ENCODE measurements at regions of chr6 and their contacts with region 1.

Region 1: GRCh38 chr6:5143634-5144311 is 58.6 kb downstream of the PPP1R3G start:
- DNase-seq: peak; percentile 89
- ATAC-seq: peak; percentile 81
- H3K4me3 Mint-ChIP-seq: no peak overlapping the region
- H3K27ac Mint-ChIP-seq: no peak overlapping the region
- H3K4me1 Mint-ChIP-seq: peaks cover 2% of the 10 kb centered on the region
- H3K27me3 Mint-ChIP-seq: no peaks in the 10 kb centered on the region

Region 2: DNA sequence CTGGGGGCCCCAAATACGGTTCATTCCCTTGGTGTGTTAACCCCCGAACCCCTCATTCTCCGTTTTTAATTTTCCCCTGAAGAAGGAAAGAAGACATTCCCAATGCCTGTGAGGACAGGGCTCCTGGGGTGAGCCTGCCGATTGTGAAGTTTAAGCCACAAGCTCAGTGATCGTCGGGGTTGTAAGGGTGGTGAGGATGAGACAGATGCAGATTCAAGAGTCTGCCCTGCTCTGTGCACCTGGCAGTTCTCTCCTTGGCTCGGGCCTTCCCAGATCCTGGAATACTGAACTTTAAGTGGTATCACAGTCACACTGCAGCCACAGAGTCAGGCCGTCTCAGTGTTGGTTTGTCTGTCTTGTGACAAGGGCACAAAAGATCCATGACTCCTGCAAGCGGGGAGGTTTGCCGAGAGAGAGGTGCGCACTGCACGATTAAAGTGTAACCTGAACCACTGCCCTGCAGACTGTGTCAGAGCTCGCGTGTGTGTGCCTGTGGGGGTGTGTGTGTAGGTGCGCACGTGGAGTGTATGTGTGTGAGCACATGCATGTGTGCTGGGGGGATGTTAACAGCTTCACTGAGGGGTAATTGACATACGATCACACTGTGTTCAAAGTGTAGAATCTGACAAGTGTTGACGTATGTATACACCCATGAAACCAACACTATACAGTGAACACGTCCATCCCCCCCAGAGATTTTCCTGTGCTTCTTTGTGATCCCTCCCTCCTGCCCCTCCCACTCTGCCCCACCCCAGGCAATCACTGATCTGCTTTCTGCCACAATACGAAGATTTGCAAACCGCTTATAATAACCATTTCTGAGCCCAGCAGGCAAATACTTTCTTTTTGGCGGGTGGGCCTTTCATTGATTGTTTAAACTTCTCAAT is 178.9 kb before region 1 on chr6:
- CTCF ChIA-PET with region 1: no interaction called
- POLR2A ChIA-PET with region 1: no interaction called
- DNase-seq: no peak
- ATAC-seq: no peak
- H3K4me3 Mint-ChIP-seq: no peak overlapping the region
- H3K27ac Mint-ChIP-seq: no peak overlapping the region
- H3K4me1 Mint-ChIP-seq: no peaks in the 10 kb centered on the region
- H3K27me3 Mint-ChIP-seq: peaks cover 4% of the 10 kb centered on the region

Region 3: DNA sequence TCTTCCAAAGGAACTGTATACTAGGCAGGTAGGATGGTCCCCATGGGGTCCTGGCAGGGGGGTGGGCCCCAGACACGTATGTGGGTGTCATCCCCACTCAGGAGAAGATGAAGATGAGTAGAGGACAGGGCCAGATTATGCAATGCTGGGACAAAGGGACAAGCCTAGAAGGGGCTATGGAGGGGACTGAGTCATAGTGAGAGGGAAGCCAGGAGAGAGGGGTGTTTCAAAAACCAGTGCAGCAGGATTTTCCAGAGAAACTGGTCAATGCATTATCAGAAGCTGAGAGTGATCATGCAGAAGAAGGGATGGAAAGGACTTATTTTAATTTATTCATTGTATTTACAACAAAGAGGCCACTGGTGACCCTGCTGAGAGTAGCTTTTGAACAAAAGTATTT is 15.4 kb after region 1 on chr6:
- CTCF ChIA-PET with region 1: interaction called, 17 read pairs
- POLR2A ChIA-PET with region 1: no interaction called
- DNase-seq: no peak
- ATAC-seq: no peak
- H3K4me3 Mint-ChIP-seq: no peak overlapping the region
- H3K27ac Mint-ChIP-seq: no peak overlapping the region
- H3K4me1 Mint-ChIP-seq: peaks cover 6% of the 10 kb centered on the region
- H3K27me3 Mint-ChIP-seq: no peaks in the 10 kb centered on the region

Region 4: DNA sequence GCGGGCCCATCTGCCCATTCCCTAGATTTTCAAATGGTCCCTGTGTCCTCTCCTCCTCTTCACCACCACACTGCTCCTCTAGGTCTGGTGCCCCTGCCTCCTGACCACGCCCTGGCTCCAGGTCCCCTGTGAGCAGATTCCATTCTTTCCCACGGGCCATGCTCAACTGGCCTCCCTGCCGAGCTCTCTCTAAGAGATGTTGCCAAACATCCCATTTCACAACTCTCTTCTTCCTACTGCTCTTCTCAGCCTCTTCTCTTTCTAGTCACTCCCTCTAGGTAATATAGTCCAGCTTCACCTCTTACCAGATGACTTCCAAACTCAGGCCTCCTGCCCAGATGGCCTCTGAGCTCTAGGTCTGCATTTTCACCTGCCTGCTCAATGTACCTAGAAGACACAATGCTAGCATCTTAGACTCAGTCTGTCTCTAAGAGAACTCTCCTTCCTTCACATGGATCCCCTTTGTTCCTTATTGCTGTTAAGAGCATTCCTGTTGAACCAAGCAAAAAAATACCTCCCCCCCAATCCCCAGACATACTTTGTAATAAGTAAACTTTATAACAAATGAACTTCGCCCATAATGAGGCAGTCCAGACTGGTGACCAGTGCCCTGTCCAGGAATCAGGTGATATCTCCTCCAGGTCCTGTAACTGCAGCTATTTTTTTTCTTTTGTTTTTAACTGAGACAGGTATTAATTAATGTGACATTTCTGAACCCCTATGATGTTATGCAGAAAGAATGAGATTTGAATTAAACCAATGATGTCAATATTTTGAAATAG is 37.9 kb after region 1 on chr6:
- CTCF ChIA-PET with region 1: interaction called, 59 read pairs
- POLR2A ChIA-PET with region 1: no interaction called
- DNase-seq: no peak
- ATAC-seq: no peak
- H3K4me3 Mint-ChIP-seq: no peak overlapping the region
- H3K27ac Mint-ChIP-seq: no peak overlapping the region
- H3K4me1 Mint-ChIP-seq: peaks cover 26% of the 10 kb centered on the region
- H3K27me3 Mint-ChIP-seq: no peaks in the 10 kb centered on the region

Region 5: GRCh38 chr6:5214570-5215052 is 70.8 kb after region 1 on chr6:
- CTCF ChIA-PET with region 1: interaction called, 18 read pairs
- POLR2A ChIA-PET with region 1: no interaction called
- DNase-seq: no peak
- ATAC-seq: no peak
- H3K4me3 Mint-ChIP-seq: no peak overlapping the region
- H3K27ac Mint-ChIP-seq: no peak overlapping the region
- H3K4me1 Mint-ChIP-seq: peaks cover 7% of the 10 kb centered on the region
- H3K27me3 Mint-ChIP-seq: no peaks in the 10 kb centered on the region

Region 6: DNA sequence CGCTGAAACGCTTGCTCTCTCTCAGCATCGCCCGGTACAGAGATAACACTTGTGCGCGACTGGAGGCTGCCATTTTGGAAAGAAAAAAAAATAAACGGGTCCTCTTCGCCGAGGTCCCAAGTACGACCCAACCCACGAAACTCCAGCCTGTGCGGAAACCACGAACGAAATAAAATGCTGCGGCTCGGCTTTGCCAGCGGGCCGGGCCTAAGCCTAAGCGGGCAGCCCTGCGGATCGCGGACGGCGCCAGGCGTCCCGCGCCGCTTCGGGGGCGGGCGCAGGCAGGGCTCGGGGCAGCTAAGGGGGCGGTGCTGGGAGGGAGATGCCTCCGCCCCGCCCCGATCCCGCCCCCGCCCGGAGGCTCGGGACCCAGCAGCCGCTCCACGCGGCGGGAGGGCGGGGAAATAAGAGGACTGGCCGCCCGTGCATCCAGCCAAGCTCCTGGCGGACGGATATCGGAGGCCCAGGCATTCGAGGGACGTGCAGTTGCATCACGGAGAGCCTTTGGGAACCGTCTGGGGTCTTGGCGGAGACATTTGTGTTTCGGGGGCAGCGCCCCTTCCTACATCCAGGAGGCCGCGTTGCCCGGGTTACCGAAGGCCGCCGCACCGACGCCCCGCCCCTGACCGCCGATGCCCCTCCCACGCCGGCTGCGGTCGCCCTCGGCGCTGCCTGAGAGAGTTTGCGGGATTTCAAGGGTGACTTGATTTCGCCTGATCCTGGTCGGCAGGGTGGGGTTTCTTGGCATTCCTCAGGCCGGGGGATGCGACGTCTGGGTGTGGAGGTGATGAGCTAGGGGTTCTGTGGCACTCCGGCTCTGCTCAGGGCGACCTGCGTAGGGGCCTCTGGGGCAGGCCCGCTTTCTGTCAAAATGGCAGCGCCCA is 117.1 kb after region 1 on chr6 and contains the starts of genes FARS2 and LYRM4:
- CTCF ChIA-PET with region 1: interaction called, 19 read pairs
- POLR2A ChIA-PET with region 1: interaction called, 8 read pairs
- DNase-seq: peak; percentile 90
- ATAC-seq: peak; percentile 88
- H3K4me3 Mint-ChIP-seq: peak within 1 kb of the TSS; percentile 99
- H3K27ac Mint-ChIP-seq: peak within 1 kb of the TSS; percentile 100
- H3K4me1 Mint-ChIP-seq: peaks cover 40% of the 10 kb centered on the region
- H3K27me3 Mint-ChIP-seq: no peaks in the 10 kb centered on the region
- total RNA-seq, gene FARS2: 16.7 to 20.2 TPM
- total RNA-seq, gene LYRM4: 28.9 to 29.8 TPM

Region 7: GRCh38 chr6:5379647-5380242 is 236.0 kb after region 1 on chr6:
- CTCF ChIA-PET with region 1: interaction called, 34 read pairs
- POLR2A ChIA-PET with region 1: no interaction called
- DNase-seq: peak; percentile 38
- ATAC-seq: no peak
- H3K4me3 Mint-ChIP-seq: no peak overlapping the region
- H3K27ac Mint-ChIP-seq: no peak overlapping the region
- H3K4me1 Mint-ChIP-seq: no peaks in the 10 kb centered on the region
- H3K27me3 Mint-ChIP-seq: no peaks in the 10 kb centered on the region

Region 8: DNA sequence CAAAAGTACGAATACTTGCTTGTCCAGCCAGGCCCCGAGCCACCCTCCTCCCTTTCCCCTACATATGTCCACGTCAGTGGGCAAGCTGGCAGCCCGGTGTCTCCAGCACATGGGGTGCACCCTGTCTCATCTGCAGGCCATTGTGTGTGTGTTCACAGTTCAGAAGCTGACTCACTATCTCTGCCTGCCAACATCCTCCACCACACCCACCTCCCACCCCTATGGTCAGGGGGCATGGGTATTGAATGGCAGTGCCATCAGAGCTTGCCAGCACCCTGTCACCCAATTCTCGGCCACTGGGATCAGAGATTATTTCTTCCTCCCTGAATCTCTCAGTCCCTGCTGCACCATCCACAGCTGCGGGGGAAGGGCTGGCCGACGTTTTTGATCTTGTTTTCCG is 313.3 kb after region 1 on chr6:
- CTCF ChIA-PET with region 1: no interaction called
- POLR2A ChIA-PET with region 1: no interaction called
- DNase-seq: no peak
- ATAC-seq: no peak
- H3K4me3 Mint-ChIP-seq: no peak overlapping the region
- H3K27ac Mint-ChIP-seq: no peak overlapping the region
- H3K4me1 Mint-ChIP-seq: peaks cover 10% of the 10 kb centered on the region
- H3K27me3 Mint-ChIP-seq: no peaks in the 10 kb centered on the region

Measured in activated CD8-positive, alpha-beta T cell treated with anti-CD3 and anti-CD28 coated beads, Interleukin-2, amount 10 ng/mL, durations not matched to agents 7 days and 5 days (primary cell).